ENCODE measurements at regions of chr13 and their contacts with region 1.

Region 1: DNA sequence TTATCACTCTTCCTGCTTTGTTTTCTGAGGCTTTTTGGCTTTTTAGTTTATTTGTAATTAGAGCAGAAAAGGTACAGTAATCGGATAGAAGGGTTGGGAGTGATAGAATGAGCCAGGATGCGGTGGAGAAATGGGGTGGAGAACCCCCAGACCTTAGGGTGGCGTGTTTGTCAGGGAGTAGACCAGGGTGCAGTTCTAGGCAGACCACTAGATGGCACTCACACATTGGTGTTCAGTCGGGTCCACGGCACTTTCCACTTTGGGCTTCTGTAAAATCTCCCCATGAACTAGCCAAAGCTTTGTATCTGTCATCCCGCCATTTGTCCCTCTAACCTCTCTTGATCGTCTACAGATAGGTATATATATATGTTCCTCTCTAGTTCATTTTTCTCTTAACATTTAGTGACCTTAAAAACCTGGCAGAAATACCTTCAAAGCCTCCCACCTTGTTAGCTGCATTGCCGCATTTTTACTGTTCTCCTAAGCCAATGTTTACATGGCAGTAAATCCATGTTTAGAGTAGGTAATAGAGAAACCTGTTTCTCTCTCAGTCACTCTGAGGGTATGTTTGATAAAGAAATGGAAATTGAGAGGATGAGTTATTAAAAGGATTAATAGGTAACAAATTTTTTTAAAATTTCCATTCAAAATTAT is 154.9 kb downstream of the TM9SF2 start:
- DNase-seq: peak; percentile 91
- ATAC-seq: peak; percentile 73
- H3K4me3 Mint-ChIP-seq: peak overlapping the region; percentile 48
- H3K27ac Mint-ChIP-seq: peak overlapping the region; percentile 62
- H3K4me1 Mint-ChIP-seq: peaks cover 49% of the 10 kb centered on the region
- H3K27me3 Mint-ChIP-seq: no peaks in the 10 kb centered on the region

Region 2: DNA sequence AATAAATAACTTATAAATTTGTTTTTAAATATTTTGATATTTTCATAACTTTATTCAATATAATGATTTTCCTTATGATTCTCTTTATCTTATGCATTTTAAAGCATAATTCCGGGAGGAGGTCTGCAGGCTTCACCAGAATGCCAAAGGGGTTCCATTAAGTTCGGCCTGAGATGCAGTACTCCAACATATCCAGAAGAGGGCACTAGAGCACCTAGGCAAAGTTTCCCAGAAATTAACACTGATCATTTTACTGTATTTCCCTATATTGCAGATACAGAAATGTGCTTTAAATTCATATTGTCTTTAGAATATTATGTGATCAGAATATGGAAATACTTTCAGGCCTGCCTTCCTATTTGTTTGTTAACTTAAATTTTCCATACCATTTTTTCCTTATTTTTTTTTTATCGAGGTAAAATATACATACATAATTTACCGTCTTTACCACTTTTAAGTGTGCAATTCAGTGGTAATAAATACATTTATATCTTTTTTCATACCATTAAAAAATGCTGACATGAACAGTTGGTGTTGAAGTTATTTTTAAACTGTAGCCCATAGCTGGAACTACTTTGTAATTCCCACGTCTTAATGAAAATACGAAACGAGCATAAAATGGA is 213.8 kb before region 1 on chr13:
- CTCF ChIA-PET with region 1: interaction called, 8 read pairs
- POLR2A ChIA-PET with region 1: no interaction called
- intact Hi-C with region 1: loop called (anchors 1 to 5 kb)
- DNase-seq: peak; percentile 61
- ATAC-seq: peak; percentile 61
- H3K4me3 Mint-ChIP-seq: no peak overlapping the region
- H3K27ac Mint-ChIP-seq: no peak overlapping the region
- H3K4me1 Mint-ChIP-seq: peaks cover 9% of the 10 kb centered on the region
- H3K27me3 Mint-ChIP-seq: peaks cover 2% of the 10 kb centered on the region

Region 3: GRCh38 chr13:99819967-99820366 is 163.7 kb after region 1 on chr13:
- CTCF ChIA-PET with region 1: interaction called, 3 read pairs
- POLR2A ChIA-PET with region 1: no interaction called
- intact Hi-C with region 1: loop called in 1 of 2 experiments (anchors 2 kb)
- DNase-seq: no peak
- ATAC-seq: no peak
- H3K4me3 Mint-ChIP-seq: no peak overlapping the region
- H3K27ac Mint-ChIP-seq: no peak overlapping the region
- H3K4me1 Mint-ChIP-seq: peaks cover 19% of the 10 kb centered on the region
- H3K27me3 Mint-ChIP-seq: no peaks in the 10 kb centered on the region

Region 4: DNA sequence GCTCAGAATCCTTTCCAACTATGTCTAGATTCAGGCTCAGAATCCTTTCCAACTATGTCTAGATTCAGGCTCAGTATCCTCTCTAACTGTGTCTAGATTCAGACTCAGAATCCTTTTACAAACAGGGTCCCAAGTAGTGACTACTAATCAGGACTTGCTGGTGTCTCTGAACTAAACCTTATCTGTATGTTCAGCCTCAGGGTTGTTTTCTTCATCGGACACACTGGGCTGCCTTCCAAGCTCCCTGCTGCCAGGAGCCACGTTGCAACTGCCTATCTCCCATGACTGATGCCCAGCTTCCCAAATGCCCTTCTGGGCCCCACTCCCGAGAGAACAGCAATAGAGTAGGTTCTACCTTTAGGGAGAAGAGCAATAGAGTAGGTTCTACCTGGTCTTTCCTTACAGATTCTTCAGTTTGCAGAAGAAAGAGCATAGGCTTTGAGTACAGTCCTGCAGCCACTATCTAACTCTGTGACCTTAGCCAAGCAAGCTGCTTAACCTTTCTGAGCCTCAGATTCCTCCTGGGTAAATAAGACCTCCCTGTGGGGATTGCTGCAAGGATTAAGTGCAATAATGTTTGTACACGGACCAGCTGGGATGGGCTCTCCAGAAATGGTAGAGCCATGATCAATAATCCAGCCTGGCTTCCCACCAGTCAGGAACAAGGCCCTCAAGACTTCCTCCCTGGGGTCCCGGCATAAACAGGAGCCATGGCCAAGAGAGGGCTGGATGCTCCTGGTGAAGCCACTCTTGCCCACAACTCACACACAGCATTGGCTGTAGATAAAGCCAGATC is 253.8 kb after region 1 on chr13:
- CTCF ChIA-PET with region 1: interaction called, 6 read pairs
- POLR2A ChIA-PET with region 1: no interaction called
- intact Hi-C with region 1: loop called in 1 of 2 experiments (anchors 5 kb)
- DNase-seq: no peak
- ATAC-seq: no peak
- H3K4me3 Mint-ChIP-seq: no peak overlapping the region
- H3K27ac Mint-ChIP-seq: no peak overlapping the region
- H3K4me1 Mint-ChIP-seq: peaks cover 13% of the 10 kb centered on the region
- H3K27me3 Mint-ChIP-seq: peaks cover 25% of the 10 kb centered on the region

Region 5: DNA sequence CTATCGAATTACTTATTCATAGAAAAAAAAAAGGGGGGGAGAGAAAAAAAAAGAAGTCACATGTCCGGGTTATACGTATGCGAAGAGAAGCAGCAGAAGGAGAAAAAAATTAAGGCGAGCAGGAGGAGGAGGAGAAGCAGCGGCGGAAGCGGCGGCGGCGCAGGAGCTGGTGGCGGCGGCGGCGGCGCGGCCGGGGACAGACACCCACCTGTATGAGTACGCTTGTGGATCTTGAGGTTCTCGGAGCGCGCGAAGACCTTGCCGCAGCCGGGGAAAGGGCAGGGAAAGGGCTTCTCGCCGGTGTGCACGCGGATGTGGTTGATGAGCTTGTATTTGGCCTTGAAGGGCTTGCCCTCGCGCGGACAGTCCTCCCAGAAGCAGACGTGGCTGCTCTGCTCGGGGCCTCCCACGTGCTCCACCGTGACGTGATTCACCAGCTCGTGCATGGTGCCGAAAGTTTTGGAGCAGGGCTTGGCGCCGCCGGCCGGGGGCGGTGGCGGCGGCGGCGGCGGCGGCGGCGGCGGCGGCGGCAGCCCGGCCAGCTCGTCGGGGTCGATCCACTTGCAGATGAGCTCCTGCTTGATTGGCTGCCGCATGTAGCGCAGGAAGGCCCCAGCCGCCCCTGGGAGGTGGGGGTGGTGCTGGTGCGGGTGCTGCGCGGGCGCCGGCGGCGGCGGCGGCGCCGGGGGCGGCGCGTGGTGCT is 313.9 kb after region 1 on chr13:
- CTCF ChIA-PET with region 1: interaction called, 10 read pairs
- POLR2A ChIA-PET with region 1: no interaction called
- intact Hi-C with region 1: no loop called
- DNase-seq: peak; percentile 63
- ATAC-seq: peak; percentile 54
- H3K4me3 Mint-ChIP-seq: peak overlapping the region; percentile 72
- H3K27ac Mint-ChIP-seq: no peak overlapping the region
- H3K4me1 Mint-ChIP-seq: peaks cover 17% of the 10 kb centered on the region
- H3K27me3 Mint-ChIP-seq: peaks cover 64% of the 10 kb centered on the region

Region 6: DNA sequence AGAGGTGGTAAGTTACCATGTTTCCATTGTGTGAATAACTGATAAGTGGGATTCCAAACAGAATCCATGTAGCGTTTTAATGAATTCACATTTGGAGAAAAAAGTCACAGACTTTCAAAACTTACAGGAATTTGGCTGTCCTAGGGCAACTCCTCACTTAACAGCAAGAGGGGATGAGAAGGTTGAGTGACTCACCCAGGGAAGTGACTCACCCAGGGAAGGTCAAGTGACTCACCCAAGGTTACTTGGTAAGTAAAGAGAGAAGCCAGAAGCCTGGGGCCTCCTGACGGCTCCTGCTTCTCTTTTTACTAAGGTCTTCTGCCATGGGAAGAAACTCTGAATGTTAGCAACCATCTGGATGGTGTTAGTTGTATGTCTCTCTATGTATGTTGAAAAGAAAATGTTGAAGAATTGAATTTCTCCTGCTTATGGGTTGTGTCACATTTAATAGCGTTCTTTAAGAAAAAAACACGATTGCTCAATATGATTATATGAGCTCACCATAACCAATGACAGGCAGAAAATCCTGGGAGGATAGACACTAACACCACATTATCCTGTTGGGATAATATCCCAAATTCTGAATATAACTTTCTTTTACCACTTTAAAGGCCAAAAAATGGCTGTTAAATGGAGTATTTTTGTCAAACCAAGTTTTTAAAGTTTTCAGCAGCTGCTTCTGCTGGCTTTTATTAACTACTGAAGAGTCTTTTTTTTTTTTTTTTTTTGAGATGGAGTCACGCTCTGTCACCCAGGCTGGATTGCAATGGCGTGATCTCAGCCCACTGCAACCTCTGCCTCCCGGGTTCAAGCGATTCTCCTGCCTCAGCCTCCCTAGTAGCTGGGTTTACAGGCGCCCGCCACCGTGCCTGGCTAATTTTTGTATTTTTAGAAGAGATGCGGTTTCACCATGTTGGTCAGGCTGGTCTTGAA is 736.8 kb after region 1 on chr13:
- CTCF ChIA-PET with region 1: no interaction called
- POLR2A ChIA-PET with region 1: no interaction called
- intact Hi-C with region 1: loop called (anchors 5 kb)
- DNase-seq: peak; percentile 85
- ATAC-seq: peak; percentile 80
- H3K4me3 Mint-ChIP-seq: no peak overlapping the region
- H3K27ac Mint-ChIP-seq: peak overlapping the region; percentile 59
- H3K4me1 Mint-ChIP-seq: peaks cover 31% of the 10 kb centered on the region
- H3K27me3 Mint-ChIP-seq: no peaks in the 10 kb centered on the region

Region 7: GRCh38 chr13:100588331-100589177 is 932.3 kb after region 1 on chr13 and contains the start of gene GGACT:
- CTCF ChIA-PET with region 1: no interaction called
- POLR2A ChIA-PET with region 1: no interaction called
- intact Hi-C with region 1: loop called in 1 of 2 experiments (anchors 5 kb)
- DNase-seq: peak; percentile 90
- ATAC-seq: peak; percentile 94
- H3K4me3 Mint-ChIP-seq: peak within 1 kb of the TSS; percentile 75
- H3K27ac Mint-ChIP-seq: peak within 1 kb of the TSS; percentile 86
- H3K4me1 Mint-ChIP-seq: peaks cover 37% of the 10 kb centered on the region
- H3K27me3 Mint-ChIP-seq: no peaks in the 10 kb centered on the region
- total RNA-seq, gene GGACT: 6.8 to 7.0 TPM